MCF 10A (cell line): ENCODE measurements at regions of chr3 and their contacts with region 1.

Region 1: DNA sequence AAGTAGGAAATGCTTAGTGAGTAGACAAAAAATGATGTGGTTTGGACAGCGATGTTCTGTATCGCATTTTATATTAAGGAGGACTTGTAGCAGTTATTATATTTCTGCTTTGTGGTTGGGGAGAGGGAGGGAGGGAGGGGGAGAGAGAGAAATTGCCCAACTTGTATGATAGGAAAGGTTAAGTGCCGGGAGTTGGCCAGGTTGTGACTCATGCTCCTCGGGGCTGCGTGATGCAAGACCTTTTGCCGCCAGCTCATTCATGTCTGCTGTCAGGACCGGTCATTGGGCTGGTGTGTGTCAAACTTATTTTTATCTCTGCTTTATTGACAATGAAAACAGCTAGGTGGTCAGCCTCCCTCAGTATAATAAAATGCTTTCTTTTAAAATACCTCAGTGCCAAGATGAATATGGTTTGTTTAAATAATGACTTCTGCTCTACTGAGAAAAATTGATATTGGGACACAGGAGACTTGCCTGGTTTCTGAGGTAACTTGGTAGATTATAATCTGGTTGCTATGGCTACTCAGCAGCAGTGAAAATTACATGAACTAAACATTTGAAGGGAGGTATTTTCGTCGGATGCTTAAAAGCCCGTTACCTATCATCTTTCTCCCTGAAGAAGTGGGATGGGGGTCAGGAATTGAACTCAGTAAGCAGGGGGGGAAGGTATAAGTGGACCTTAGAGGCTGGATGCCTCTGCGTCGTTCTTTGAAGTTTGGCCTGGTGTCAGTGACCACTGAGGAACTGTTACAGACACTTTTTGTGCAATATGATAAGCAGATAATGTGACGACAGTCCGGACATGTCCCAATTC is 90.7 kb downstream of the FNDC3B start:
- DNase-seq: peak; percentile 98
- H3K4me3 Mint-ChIP-seq: peak overlapping the region; percentile 48
- H3K27ac Mint-ChIP-seq: peak overlapping the region; percentile 99
- H3K4me1 Mint-ChIP-seq: peaks cover 36% of the 10 kb centered on the region
- H3K27me3 Mint-ChIP-seq: no peaks in the 10 kb centered on the region
- CTCF ChIP-seq: no peak

Region 2: GRCh38 chr3:172087602-172088580 is 42.2 kb before region 1 on chr3:
- CTCF ChIA-PET with region 1: interaction called, 5 read pairs
- POLR2A ChIA-PET with region 1: interaction called, 13 read pairs
- intact Hi-C with region 1: no loop called
- DNase-seq: no peak
- H3K4me3 Mint-ChIP-seq: peak overlapping the region; percentile 48
- H3K27ac Mint-ChIP-seq: peak overlapping the region; percentile 75
- H3K4me1 Mint-ChIP-seq: peaks cover 35% of the 10 kb centered on the region
- H3K27me3 Mint-ChIP-seq: no peaks in the 10 kb centered on the region
- CTCF ChIP-seq: no peak

Region 3: DNA sequence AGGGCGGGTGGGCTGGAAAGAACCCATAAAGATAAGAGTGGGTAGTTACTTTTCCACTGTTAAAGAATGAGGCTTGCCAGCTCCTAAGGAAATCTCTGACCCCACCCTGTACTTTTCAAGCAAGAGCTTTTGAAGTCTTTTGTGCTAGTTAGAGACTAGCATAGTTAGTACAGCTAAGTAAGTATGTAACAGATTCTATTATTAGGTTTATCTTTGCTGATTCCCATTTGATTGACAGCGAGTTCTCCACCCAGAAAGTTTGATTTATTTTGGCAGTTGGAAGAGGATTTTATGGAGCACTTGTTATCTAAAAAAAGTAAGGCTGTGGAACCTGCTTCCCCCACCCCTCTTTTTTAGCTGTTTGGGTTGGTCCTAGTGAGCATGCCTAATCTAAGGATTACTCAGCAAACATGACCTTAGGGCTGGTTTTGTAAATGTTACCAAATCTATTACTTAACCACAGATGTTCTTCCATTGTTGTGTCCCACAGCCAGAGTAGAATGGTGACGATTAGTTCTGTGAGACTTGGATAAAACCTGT is 33.1 kb before region 1 on chr3:
- CTCF ChIA-PET with region 1: interaction called, 5 read pairs
- POLR2A ChIA-PET with region 1: interaction called, 10 read pairs
- intact Hi-C with region 1: no loop called
- DNase-seq: peak; percentile 90
- H3K4me3 Mint-ChIP-seq: peak overlapping the region; percentile 30
- H3K27ac Mint-ChIP-seq: peak overlapping the region; percentile 82
- H3K4me1 Mint-ChIP-seq: peaks cover 32% of the 10 kb centered on the region
- H3K27me3 Mint-ChIP-seq: no peaks in the 10 kb centered on the region
- CTCF ChIP-seq: no peak

Region 4: DNA sequence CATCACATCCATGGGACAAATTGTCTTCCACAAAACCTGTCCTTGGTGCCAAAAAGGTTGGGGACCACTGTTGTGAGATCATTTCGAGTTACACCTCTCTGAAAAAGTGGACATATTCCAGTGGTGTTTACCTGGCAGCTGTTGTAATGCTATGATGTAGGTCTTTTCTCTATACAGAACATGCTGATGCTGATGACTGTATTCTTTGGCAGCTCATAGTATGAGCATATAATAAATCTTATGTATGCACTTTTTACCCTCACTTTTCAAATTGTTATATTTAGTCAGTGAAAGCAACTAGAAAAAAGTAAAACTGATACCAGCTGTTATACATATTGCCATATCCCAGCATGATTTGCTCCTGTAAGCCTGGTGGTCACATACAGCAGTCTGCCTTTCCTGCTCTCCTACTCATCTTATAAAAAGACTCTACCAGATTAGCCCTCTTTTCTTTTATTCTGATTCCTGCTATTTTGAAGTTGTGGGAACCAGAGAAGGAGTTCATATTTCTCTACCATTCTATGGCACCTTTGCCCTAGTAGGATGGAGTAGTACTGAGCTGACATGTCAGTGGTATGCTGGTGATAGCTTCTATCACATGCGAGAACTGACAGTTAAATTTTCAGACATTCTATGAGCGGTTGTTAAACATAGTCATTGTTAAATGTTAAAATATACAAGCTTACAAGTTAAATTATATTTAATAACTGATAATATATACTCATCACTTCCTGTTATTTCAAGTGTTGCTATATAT is 38.0 kb after region 1 on chr3:
- CTCF ChIA-PET with region 1: interaction called, 5 read pairs
- POLR2A ChIA-PET with region 1: interaction called, 25 read pairs
- intact Hi-C with region 1: no loop called
- DNase-seq: no peak
- H3K4me3 Mint-ChIP-seq: no peak overlapping the region
- H3K27ac Mint-ChIP-seq: peak overlapping the region; percentile 96
- H3K4me1 Mint-ChIP-seq: peaks cover 16% of the 10 kb centered on the region
- H3K27me3 Mint-ChIP-seq: no peaks in the 10 kb centered on the region
- CTCF ChIP-seq: no peak

Region 5: DNA sequence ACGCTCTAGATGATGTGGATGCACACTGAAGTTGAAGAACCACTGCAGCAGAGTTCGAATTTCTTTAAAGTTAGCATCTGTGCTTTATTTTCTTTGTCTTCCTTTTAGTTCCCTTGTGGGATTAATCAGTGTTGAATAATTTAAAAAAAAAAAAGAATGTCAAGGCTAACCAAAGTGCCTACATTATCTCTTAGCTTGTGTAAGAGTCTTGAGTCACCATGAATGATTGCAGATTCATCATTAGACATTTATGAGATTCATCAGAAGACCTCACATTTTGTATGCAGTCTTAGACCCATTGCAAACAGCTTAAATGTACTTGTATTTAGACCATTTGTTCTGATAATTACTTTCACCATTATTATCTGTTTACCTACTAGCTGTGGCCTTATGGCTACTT is 91.5 kb after region 1 on chr3:
- CTCF ChIA-PET with region 1: no interaction called
- POLR2A ChIA-PET with region 1: interaction called, 3 read pairs
- intact Hi-C with region 1: loop called (anchors 5 kb)
- DNase-seq: peak; percentile 44
- H3K4me3 Mint-ChIP-seq: no peak overlapping the region
- H3K27ac Mint-ChIP-seq: no peak overlapping the region
- H3K4me1 Mint-ChIP-seq: peaks cover 39% of the 10 kb centered on the region
- H3K27me3 Mint-ChIP-seq: no peaks in the 10 kb centered on the region
- CTCF ChIP-seq: no peak

Region 6: GRCh38 chr3:172244011-172244410 is 113.9 kb after region 1 on chr3:
- CTCF ChIA-PET with region 1: no interaction called
- POLR2A ChIA-PET with region 1: interaction called, 3 read pairs
- intact Hi-C with region 1: loop called (anchors 1 kb)
- DNase-seq: peak; percentile 82
- H3K4me3 Mint-ChIP-seq: no peak overlapping the region
- H3K27ac Mint-ChIP-seq: no peak overlapping the region
- H3K4me1 Mint-ChIP-seq: peaks cover 28% of the 10 kb centered on the region
- H3K27me3 Mint-ChIP-seq: no peaks in the 10 kb centered on the region
- CTCF ChIP-seq: no peak

Region 7: GRCh38 chr3:172305552-172305951 is 175.5 kb after region 1 on chr3:
- CTCF ChIA-PET with region 1: no interaction called
- POLR2A ChIA-PET with region 1: no interaction called
- intact Hi-C with region 1: loop called (anchors 10 kb)
- DNase-seq: peak; percentile 86
- H3K4me3 Mint-ChIP-seq: no peak overlapping the region
- H3K27ac Mint-ChIP-seq: peak overlapping the region; percentile 59
- H3K4me1 Mint-ChIP-seq: peaks cover 32% of the 10 kb centered on the region
- H3K27me3 Mint-ChIP-seq: no peaks in the 10 kb centered on the region
- CTCF ChIP-seq: no peak

Region 8: GRCh38 chr3:173027429-173027828 is 897.4 kb after region 1 on chr3:
- CTCF ChIA-PET with region 1: no interaction called
- POLR2A ChIA-PET with region 1: no interaction called
- intact Hi-C with region 1: no loop called
- DNase-seq: no peak
- H3K4me3 Mint-ChIP-seq: no peak overlapping the region
- H3K27ac Mint-ChIP-seq: no peak overlapping the region
- H3K4me1 Mint-ChIP-seq: no peaks in the 10 kb centered on the region
- H3K27me3 Mint-ChIP-seq: peaks cover 82% of the 10 kb centered on the region
- CTCF ChIP-seq: no peak